Tibial artery (tissue), 4 donors: ENCODE measurements at regions of chrX and their contacts with region 1.

Region 1: DNA sequence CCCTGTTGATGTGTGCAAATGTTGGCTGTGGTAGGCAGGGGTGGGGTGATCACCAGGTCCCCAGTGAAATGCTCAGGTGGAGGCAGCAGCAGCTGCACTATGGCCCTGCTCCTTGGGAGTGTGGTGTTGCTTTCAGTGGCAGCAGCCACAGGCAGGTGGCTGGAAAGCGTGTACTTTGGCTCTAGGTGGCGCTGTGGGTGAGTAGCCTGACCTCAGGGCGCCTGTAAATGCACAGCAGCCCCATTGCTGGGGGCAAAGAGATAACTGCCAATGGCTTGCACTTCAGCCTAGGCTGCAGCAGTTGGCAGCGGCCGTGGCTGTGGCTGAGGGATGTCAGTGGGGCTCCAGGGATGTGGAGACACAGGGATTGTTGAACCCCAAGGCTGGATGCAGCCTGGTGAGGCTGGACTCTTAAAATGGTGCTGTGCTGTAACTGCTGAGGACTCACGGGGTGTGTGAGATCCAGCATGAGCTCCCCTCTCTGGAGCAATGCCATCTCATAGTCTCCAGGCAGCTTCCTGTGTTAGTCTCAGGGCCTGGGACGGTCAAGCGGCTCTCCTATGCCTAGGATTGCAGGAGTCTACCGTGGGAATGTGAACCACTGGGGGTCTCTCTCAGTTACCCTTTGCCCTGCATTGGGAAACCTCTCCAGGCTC is 421.7 kb upstream of the HTR2C start:
- DNase-seq: no peak
- H3K4me3 ChIP-seq: no peak overlapping the region
- H3K27ac ChIP-seq: no peak overlapping the region
- H3K4me1 ChIP-seq: no peaks in the 10 kb centered on the region
- H3K27me3 ChIP-seq: no peaks in the 10 kb centered on the region
- CTCF ChIP-seq: no peak

Region 2: DNA sequence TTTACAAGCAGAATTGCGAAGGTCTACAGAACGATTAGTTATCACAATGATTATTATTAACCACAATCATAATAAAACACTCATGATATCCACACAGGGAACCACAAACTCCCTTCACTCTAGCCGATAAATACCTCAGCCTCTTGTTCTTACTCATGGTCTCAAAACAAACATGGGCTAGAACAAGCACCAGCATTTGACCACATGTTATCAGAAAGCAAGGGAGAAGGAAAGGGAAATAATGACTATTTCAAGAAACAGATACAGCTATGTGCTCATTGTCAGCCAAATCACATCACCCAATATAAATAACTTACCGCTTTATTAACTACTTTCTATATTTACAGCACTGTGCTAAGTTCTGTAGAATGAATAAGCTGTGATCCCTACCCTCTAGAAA is 241.5 kb before region 1 on chrX:
- intact Hi-C with region 1: no loop called
- DNase-seq: no peak
- H3K4me3 ChIP-seq: no peak overlapping the region
- H3K27ac ChIP-seq: no peak overlapping the region
- H3K4me1 ChIP-seq: no peaks in the 10 kb centered on the region
- H3K27me3 ChIP-seq: no peaks in the 10 kb centered on the region
- CTCF ChIP-seq: no peak

Region 3: DNA sequence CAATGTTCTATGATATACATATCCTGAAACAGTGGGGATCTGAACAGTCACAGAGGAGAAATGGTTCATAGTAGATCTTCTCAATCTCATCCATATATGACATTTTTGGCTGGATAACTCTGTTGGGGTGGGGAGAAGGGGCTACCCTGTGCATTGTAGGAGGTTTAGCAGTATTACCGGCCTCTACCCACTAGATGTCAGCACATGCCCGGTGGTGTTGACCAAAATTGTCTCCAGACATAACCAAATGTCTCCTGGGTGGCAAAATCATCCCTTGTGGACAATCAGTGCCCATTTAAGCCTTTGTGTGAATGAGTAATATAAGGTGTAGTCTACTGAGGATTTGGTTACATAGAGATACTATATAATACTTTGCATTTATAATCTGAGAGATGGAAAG is 1488.7 kb after region 1 on chrX:
- intact Hi-C with region 1: loop called (anchors 5 kb)
- DNase-seq: no peak
- H3K4me3 ChIP-seq: no peak overlapping the region
- H3K27ac ChIP-seq: peak overlapping the region in 1 of 2 donors; percentile 46
- H3K4me1 ChIP-seq: peaks cover 0 to 37% (median 0%) of the 10 kb centered on the region in 4 donors
- H3K27me3 ChIP-seq: no peaks in the 10 kb centered on the region
- CTCF ChIP-seq: peak; percentile 25 to 38